ENCODE measurements at regions of chr14 and their contacts with region 1.

Region 1: GRCh38 chr14:42277840-42278239 is 671.2 kb downstream of the LRFN5 start:
- DNase-seq: no peak
- ATAC-seq: peak; percentile 52
- H3K4me3 Mint-ChIP-seq: no peak overlapping the region
- H3K27ac Mint-ChIP-seq: no peak overlapping the region
- H3K4me1 Mint-ChIP-seq: peaks cover 18% of the 10 kb centered on the region
- H3K27me3 Mint-ChIP-seq: no peaks in the 10 kb centered on the region
- CTCF ChIP-seq: no peak

Region 2: GRCh38 chr14:43898687-43899086 is 1620.8 kb after region 1 on chr14:
- CTCF ChIA-PET with region 1: no interaction called
- POLR2A ChIA-PET with region 1: no interaction called
- intact Hi-C with region 1: loop called (anchors 5 kb)
- DNase-seq: no peak
- ATAC-seq: no peak
- H3K4me3 Mint-ChIP-seq: no peak overlapping the region
- H3K27ac Mint-ChIP-seq: no peak overlapping the region
- H3K4me1 Mint-ChIP-seq: no peaks in the 10 kb centered on the region
- H3K27me3 Mint-ChIP-seq: no peaks in the 10 kb centered on the region
- CTCF ChIP-seq: no peak

Measured in activated B cell treated with CpG ODN at 0.5 μM for 24 hours (primary cell).